H1 (cell line): ENCODE measurements at regions of chr1 and their contacts with region 1.

Region 1: GRCh38 chr1:12619792-12620487 is 1.9 kb upstream of the DHRS3 start:
- DNase-seq: peak in 1 of 2 experiments; percentile 93
- H3K4me3 ChIP-seq: peak overlapping the region; percentile 81 to 97 (median 90)
- H3K27ac ChIP-seq: no peak overlapping the region
- H3K4me1 ChIP-seq: peaks cover 4 to 24% (median 12%) of the 10 kb centered on the region in 4 experiments; a peak in 6 of 7 replicates
- H3K27me3 ChIP-seq: no peaks in the 10 kb centered on the region; a peak in 1 of 7 replicates
- CTCF ChIP-seq: peak in 2 of 3 experiments; percentile 94 to 95; a peak in 3 of 4 replicates
- EP300 ChIP-seq: no peak
- POLR2A ChIP-seq: no peak
- RAD21 ChIP-seq: peak; percentile 98 to 99

Region 2: DNA sequence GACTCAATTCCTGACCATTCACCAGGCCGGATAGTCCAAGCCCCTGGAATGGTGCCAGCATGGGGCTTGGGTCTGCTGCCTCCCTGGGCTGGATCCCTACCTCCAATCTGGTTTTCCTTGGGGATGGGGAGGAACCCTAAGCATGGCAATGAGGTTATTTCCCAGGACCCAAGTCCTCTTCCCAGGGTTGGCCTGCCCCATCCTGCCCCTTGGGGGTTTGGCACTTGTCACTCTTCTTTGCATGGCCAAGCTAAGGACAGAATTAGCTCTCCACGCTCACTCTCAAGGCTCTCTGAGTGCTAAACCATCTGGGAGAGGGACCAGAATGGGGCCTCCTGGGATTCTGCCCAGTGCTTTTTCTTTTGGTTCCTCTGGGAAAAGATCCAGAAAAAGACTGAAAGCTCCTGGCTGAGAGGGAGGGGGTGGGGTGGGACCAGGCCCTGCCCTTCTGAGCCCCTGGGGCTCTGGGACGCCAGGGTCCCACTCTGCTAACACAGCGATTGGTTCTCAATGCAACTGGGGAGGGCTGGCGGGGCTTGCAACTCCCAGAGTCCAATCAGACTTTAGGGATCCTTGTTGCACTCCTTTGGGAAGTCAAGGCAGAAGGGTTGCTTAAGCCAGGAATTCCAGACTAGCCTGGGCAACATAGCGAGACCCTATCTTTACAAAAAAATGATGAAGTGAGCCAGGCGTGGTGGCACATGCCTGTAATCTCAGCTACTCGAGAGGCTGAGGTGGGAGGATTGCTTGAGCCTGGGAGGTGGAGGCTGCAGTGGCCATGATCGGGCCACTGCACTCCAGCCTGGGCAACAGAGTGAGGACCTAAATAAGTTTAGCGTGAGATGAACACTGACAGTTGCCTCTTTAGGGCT is 54.6 kb before region 1 on chr1:
- CTCF ChIA-PET with region 1: no interaction called
- POLR2A ChIA-PET with region 1: no interaction called
- DNase-seq: no peak
- H3K4me3 ChIP-seq: no peak overlapping the region
- H3K27ac ChIP-seq: no peak overlapping the region
- H3K4me1 ChIP-seq: no peaks in the 10 kb centered on the region
- H3K27me3 ChIP-seq: no peaks in the 10 kb centered on the region
- CTCF ChIP-seq: no peak
- EP300 ChIP-seq: no peak
- POLR2A ChIP-seq: no peak
- RAD21 ChIP-seq: no peak

Region 3: DNA sequence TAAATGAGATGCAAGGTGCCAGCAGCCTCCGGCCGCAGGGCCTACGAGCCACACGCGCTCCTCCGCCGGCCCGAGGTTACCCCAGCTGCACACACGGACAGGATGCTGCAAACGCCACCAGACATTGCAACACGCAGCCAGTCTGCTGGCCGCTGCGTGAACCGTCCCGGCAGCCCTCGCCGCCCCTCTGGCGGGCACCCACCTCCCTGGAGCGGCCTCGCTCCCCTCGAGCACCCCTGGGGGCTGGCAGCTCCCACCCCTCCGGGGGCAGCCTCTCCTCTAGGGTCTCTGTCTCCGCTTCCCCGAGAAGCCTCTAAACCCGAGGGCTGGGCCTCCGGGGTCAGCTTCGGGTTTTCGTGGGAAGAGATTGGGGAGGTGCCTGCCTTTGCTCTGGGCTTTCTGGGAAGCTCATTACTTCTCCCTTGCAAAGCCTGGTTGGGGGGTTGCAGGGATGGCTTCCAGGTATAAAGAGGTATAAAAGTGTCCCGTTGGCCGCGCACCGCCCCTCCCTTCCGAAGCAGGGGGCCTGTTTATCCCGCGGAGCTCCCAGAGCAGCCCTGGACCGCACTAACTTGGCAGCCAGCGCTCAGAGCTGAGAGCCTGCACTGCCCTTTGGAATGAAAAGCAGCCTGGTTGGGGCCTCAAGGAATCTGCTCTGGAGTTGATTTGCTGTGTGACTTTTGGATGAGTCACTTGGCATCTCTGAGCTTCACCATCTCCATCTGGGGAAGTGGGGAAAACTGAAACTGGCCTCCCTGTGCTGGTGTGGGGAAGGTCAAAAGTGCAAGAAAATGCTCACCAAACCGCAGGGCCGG is 23.7 kb before region 1 on chr1:
- CTCF ChIA-PET with region 1: interaction called, 130 read pairs
- POLR2A ChIA-PET with region 1: interaction called, 107 read pairs
- DNase-seq: peak in 1 of 2 experiments; percentile 66
- H3K4me3 ChIP-seq: peak overlapping the region; percentile 29 to 66 (median 38)
- H3K27ac ChIP-seq: no peak overlapping the region
- H3K4me1 ChIP-seq: peaks cover 12 to 26% (median 21%) of the 10 kb centered on the region in 4 experiments
- H3K27me3 ChIP-seq: peaks cover 0 to 2% (median 0%) of the 10 kb centered on the region in 4 experiments; a peak in 1 of 7 replicates
- CTCF ChIP-seq: no peak
- EP300 ChIP-seq: no peak
- POLR2A ChIP-seq: no peak
- RAD21 ChIP-seq: no peak

Region 4: GRCh38 chr1:12604114-12604874 is 15.6 kb before region 1 on chr1:
- CTCF ChIA-PET with region 1: interaction called, 130 read pairs
- POLR2A ChIA-PET with region 1: interaction called, 107 read pairs
- DNase-seq: no peak
- H3K4me3 ChIP-seq: no peak overlapping the region
- H3K27ac ChIP-seq: no peak overlapping the region
- H3K4me1 ChIP-seq: peaks cover 11 to 31% (median 15%) of the 10 kb centered on the region in 4 experiments
- H3K27me3 ChIP-seq: no peaks in the 10 kb centered on the region
- CTCF ChIP-seq: no peak
- EP300 ChIP-seq: no peak
- POLR2A ChIP-seq: no peak
- RAD21 ChIP-seq: no peak

Region 5: GRCh38 chr1:12630946-12631530 is 11.1 kb after region 1 on chr1:
- CTCF ChIA-PET with region 1: interaction called, 20 read pairs
- POLR2A ChIA-PET with region 1: interaction called, 32 read pairs
- DNase-seq: no peak
- H3K4me3 ChIP-seq: no peak overlapping the region
- H3K27ac ChIP-seq: 0 out of 2 replicates have a peak overlapping the region, but pooled peaks have one; percentile 59
- H3K4me1 ChIP-seq: peaks cover 10 to 29% (median 20%) of the 10 kb centered on the region in 4 experiments
- H3K27me3 ChIP-seq: no peaks in the 10 kb centered on the region
- CTCF ChIP-seq: no peak
- EP300 ChIP-seq: no peak
- POLR2A ChIP-seq: no peak
- RAD21 ChIP-seq: no peak